Calu3 (cell line): ENCODE measurements at regions of chr19 and their contacts with region 1.

Region 1: DNA sequence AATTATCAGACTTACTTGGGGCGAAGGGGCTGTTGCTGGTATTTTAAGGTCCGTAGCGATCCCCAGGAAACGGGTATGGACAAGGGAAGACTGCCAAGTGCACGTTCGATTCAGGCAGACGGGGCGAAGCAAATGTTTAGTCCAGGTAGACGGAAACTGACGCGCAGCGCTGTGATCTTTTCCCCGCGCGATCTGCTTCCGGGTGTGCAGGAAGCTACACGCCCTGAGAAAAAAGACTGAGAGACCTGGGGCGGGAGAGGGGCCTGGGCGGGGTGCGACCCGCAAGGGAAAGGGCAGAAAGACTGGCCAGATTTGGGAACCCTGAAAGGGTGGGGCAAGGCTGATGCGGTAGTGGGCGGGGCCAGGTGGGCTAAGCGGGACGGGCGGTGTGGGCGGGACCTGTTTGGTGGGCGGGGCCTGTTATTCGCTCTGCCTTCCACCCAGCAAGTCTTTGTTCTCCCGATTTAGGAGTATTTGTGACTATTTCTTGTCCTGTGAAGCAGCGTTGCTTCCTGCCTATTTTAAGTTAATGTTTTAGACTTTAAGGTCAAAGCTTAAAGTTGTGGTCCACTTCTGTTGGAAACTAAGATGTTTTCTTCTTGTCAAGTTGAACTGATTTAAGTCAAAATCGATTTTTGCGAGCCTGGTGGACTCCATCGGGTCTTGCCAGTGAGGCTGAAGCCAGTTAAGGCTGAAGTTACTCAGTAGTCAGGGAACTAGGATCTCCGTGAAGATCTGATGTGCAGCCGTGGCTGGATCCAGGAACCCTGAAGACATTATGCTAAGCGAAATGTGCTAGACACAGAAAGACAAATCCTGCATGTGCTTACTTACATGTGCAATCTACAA is at the start of gene ZNF836:
- DNase-seq: peak; percentile 91
- H3K4me3 Mint-ChIP-seq: peak within 1 kb of the TSS; percentile 85
- H3K27ac Mint-ChIP-seq: peak within 1 kb of the TSS; percentile 94
- H3K4me1 Mint-ChIP-seq: peaks cover 12% of the 10 kb centered on the region
- H3K27me3 Mint-ChIP-seq: no peaks in the 10 kb centered on the region
- CTCF ChIP-seq: no peak
- total RNA-seq, gene ZNF836: 11.3 and 12.0 TPM in 2 replicates

Region 2: DNA sequence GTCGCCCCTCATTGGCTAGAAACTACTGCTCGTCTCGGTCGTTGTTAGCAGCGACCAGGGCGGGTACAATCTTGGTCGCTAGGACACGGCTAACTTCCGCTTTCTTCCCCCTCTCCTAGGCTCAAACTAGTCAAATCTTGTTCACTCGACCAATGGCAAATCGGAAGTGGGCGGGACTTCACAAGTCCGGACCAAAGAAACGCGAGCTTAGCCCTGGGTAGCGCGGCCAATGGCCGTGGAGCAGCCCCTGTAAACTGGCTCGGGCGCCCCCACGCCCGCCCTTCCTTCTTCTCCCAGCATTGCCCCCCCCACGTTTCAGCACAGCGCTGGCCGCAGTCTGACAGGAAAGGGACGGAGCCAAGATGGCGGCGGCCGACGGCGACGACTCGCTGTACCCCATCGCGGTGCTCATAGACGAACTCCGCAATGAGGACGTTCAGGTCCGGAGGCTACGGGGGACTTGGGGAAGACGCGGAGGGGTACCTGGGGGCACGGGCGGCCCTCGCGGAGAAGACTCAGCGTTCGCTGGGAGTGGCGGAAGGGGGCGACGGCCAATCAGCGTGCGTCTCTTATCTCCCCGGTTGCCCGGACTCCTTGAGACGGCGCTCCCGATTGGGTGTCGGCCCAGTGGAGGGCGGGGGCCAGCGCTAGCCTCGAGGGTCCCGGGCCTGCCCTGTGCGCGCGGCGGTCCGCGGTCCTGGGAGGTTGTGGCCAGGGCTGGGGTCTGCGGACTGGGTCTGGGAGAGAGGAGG is 18.4 kb after region 1 on chr19 and contains the start of gene PPP2R1A:
- CTCF ChIA-PET with region 1: interaction called, 5 read pairs
- intact Hi-C with region 1: loop called (anchors 2 kb)
- DNase-seq: peak; percentile 98
- H3K4me3 Mint-ChIP-seq: peak within 1 kb of the TSS; percentile 97
- H3K27ac Mint-ChIP-seq: peak within 1 kb of the TSS; percentile 100
- H3K4me1 Mint-ChIP-seq: peaks cover 23% of the 10 kb centered on the region
- H3K27me3 Mint-ChIP-seq: no peaks in the 10 kb centered on the region
- CTCF ChIP-seq: no peak
- total RNA-seq, gene PPP2R1A: 288 and 291 TPM in 2 replicates

Region 3: DNA sequence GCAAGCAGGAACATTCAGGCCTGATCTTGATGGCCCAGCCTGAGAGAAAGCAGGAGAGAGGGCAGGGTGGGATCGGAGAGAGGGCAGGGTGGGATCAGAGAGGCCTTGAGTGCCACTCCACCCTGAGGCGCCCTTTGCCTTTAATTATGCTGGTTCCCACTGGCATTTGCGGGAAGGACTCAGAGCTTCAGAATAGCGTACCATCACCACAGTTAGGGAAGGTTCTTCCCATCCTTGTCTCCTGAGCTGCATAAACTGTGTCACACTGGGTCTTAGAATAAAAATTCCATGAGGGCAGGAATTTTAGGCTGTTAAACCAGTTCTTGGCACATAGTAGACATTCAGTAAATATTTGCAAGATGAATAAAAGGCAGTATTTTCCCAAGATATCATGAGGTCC is 42.6 kb after region 1 on chr19:
- CTCF ChIA-PET with region 1: no interaction called
- intact Hi-C with region 1: no loop called
- DNase-seq: no peak
- H3K4me3 Mint-ChIP-seq: no peak overlapping the region
- H3K27ac Mint-ChIP-seq: no peak overlapping the region
- H3K4me1 Mint-ChIP-seq: no peaks in the 10 kb centered on the region
- H3K27me3 Mint-ChIP-seq: no peaks in the 10 kb centered on the region
- CTCF ChIP-seq: no peak